ENCODE measurements at regions of chr4 and their contacts with region 1.

Region 1: DNA sequence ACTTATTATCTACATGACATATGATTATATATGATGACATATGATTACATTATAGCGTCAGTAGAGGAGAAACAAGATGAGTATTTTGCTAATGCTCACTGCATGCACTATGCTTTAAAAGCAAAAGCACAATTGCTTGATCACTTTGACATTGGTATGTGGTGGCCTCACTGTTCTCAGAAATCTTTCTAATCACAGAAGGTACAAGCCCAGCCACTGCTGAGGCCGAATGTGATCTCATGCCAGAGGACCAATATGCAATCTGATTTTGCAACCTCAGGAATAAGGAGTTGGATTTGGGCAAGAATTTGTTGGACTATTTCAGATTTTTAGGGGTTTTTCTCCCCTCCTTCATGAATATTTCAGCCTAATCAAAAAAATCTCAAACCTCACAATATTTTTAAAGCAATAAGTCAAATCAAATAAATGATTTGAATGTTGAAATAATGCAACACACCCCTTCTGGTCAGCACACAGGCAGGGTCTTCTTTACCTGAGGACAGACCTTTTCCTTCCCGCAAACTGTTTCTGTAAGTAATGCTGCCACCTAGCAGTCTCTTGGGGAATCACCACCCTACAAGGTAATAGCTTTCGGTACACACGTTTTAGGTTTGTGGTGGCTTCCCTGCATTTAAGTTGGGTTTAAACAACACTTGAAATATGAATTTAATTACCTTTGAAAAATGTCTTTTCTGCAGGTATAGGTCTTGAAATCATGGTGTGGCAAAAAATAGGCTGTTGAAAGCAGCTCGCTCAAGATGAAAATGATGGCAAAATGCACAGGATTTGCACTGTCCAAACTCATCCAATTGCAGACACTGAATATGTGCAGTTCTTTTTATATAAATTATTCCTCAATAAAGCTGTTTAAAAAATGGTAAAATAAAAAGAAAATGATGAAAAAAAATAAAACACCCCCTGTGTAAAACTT is 4.8 kb upstream of the CXCL13 start:
- DNase-seq: peak; percentile 61
- H3K27ac ChIP-seq: no peak overlapping the region
- CTCF ChIP-seq: peak; percentile 88

Region 2: DNA sequence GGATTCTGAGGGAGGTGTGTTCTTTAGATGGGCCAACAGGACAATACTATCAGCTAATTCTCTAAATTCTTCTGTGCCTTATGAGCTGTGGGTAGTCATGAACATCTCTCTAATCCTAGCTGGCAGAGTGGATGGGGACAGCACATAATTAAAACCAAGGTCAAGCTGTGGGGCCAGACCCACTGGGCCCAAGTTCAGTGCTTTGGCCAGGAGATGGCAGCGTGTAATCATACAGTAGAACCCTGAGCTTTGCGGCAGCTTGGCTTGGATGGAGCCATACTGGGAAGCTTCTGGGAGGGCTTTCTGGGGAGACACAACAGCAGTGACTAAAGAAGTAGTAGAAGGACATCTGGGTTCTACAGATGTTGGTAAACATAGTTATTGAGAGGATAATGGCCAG is 135.5 kb before region 1 on chr4:
- CTCF ChIA-PET with region 1: interaction called, 17 read pairs
- POLR2A ChIA-PET with region 1: no interaction called
- DNase-seq: peak; percentile 41
- H3K27ac ChIP-seq: no peak overlapping the region
- CTCF ChIP-seq: no peak; the same call in 1 of the 2 replicates